H1 (cell line): ENCODE measurements at regions of chr6 and their contacts with region 1.

Region 1: GRCh38 chr6:27825025-27825793 is 87.0 kb downstream of the OR2B2 start:
- DNase-seq: no peak
- H3K4me3 ChIP-seq: peak overlapping the region; percentile 59 to 90 (median 81)
- H3K27ac ChIP-seq: peak overlapping the region; percentile 95; the same call in 1 of the 2 replicates
- H3K4me1 ChIP-seq: peaks cover 0 to 3% (median 0%) of the 10 kb centered on the region in 4 experiments; a peak in 1 of 7 replicates
- H3K27me3 ChIP-seq: no peaks in the 10 kb centered on the region
- CTCF ChIP-seq: no peak
- EP300 ChIP-seq: no peak
- POLR2A ChIP-seq: peak in 1 of 2 experiments; percentile 32; a peak in 2 of 3 replicates
- RAD21 ChIP-seq: no peak

Region 2: DNA sequence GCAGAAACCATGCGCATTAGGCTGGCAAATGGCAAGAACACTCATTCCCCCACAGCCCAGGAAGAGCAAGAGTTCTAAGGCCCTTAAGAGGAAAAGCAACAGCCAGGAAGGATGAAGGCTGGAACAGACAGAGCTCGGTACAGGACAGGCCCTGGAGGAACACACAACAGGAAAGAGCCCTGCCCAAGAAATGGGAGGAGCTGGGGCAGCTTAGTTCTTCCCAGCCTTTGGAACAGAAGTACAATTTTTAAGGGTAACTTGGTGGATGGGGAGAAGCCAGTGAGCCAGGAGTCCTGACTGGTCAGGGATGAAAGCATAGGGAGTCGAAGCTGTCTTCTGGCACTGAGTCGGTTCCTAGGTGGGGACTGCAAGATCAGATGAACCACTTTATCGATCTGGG is 54.6 kb after region 1 on chr6:
- CTCF ChIA-PET with region 1: no interaction called
- POLR2A ChIA-PET with region 1: interaction called, 2,035 read pairs
- DNase-seq: peak in 1 of 2 experiments; percentile 28
- H3K4me3 ChIP-seq: no peak overlapping the region
- H3K27ac ChIP-seq: no peak overlapping the region
- H3K4me1 ChIP-seq: peaks cover 0 to 8% (median 2%) of the 10 kb centered on the region in 4 experiments; a peak in 1 of 7 replicates
- H3K27me3 ChIP-seq: no peaks in the 10 kb centered on the region
- CTCF ChIP-seq: no peak
- EP300 ChIP-seq: no peak
- POLR2A ChIP-seq: no peak
- RAD21 ChIP-seq: no peak

Region 3: DNA sequence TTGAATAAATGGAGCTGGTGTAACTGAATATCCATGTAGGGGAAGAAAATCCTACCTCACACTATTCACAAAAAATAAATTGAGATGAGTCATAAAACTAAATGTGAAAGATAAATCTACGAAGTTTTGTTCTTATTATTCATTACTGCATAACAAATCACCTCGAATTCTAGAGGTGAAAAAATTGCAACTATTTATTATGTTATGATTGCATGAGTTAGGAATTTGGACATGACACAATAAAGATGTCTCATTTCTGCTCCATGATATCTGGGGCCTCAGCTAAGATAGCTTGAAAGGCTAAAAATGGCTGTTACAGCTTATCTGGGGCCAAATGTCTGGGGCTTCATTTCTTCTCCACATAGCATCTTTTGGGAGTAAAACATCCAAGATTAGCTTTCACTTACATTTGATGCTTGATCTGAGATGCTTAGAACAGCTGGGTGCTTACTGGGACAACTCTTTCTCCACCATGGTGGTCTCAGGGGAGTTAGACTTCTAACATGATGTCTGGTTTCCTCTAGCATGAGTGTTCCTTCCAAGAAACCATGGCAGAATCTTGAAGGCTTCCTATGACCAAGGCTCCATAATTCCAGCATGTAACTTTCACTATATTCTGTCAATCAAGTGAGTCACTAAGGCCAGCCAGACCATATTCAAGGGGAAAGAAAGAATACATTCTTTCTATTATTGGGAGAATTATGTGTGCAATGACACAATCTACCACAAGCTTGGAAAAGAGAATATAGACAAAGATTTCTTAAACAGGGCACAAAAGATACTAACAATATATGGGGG is 161.9 kb after region 1 on chr6:
- CTCF ChIA-PET with region 1: no interaction called
- POLR2A ChIA-PET with region 1: no interaction called
- DNase-seq: no peak
- H3K4me3 ChIP-seq: no peak overlapping the region
- H3K27ac ChIP-seq: no peak overlapping the region
- H3K4me1 ChIP-seq: no peaks in the 10 kb centered on the region
- H3K27me3 ChIP-seq: no peaks in the 10 kb centered on the region
- CTCF ChIP-seq: no peak
- EP300 ChIP-seq: no peak
- POLR2A ChIP-seq: no peak
- RAD21 ChIP-seq: no peak